ENCODE measurements at regions of chr5 and their contacts with region 1.

Region 1: GRCh38 chr5:14644623-14645237 is 19.8 kb upstream of the OTULIN start:
- DNase-seq: no peak
- H3K4me3 ChIP-seq: no peak overlapping the region
- H3K27me3 ChIP-seq: peaks cover 12% of the 10 kb centered on the region
- CTCF ChIP-seq: no peak

Region 2: GRCh38 chr5:13976867-13977830 is 667.6 kb before region 1 on chr5:
- CTCF ChIA-PET with region 1: interaction called, 31 read pairs
- POLR2A ChIA-PET with region 1: no interaction called
- DNase-seq: no peak
- H3K4me3 ChIP-seq: no peak overlapping the region
- H3K27me3 ChIP-seq: 0 out of 2 replicates have a peak, but pooled peaks cover 1% of the 10 kb centered on the region
- CTCF ChIP-seq: peak; percentile 63

Region 3: DNA sequence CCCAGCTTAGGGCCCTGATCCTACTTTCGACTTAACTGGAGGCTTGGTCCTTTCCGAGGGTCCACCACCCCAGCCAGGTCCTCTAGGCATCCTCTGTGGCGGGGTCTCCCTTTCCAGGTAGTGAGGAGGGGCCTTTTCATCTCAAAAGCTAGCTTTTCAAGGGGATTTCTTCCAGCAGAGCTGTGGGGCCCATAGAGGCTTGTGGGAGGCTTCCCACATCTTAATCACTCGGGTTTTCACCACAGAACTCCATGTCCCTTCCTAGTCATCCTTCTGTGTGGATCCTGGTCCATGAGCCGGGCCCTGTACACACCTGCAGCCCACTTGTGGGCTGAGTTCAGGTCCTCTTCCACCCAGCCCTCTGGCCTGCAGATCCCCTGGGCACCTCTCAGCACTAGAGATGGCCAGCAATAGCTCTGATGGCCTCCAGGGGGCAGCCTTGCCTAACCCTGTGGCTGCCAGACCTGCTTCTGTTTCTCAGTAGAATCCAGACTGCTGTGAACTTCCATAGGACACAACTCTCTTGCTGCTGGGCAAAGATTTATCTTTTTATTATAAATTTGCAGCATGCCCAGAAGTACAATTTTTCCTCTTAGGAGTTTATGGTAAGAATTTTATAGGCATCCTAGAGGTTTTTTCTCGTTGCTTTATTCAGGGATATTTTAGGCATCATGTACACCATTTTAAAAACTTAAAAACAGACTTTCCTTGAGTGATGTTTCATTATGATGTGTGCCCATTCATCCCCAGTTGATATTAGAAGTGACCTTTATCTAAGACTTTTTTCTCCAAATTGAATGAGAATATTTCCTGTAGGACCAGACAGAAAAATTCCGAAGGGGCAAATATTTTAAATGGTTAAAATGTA is 292.7 kb before region 1 on chr5:
- CTCF ChIA-PET with region 1: interaction called, 22 read pairs
- POLR2A ChIA-PET with region 1: no interaction called
- DNase-seq: peak; percentile 9
- H3K4me3 ChIP-seq: no peak overlapping the region
- H3K27me3 ChIP-seq: no peaks in the 10 kb centered on the region
- CTCF ChIP-seq: peak; percentile 99

Region 4: GRCh38 chr5:14399054-14399692 is 245.6 kb before region 1 on chr5:
- CTCF ChIA-PET with region 1: interaction called, 41 read pairs
- POLR2A ChIA-PET with region 1: no interaction called
- DNase-seq: no peak
- H3K4me3 ChIP-seq: no peak overlapping the region
- H3K27me3 ChIP-seq: no peaks in the 10 kb centered on the region
- CTCF ChIP-seq: peak; percentile 68

Region 5: DNA sequence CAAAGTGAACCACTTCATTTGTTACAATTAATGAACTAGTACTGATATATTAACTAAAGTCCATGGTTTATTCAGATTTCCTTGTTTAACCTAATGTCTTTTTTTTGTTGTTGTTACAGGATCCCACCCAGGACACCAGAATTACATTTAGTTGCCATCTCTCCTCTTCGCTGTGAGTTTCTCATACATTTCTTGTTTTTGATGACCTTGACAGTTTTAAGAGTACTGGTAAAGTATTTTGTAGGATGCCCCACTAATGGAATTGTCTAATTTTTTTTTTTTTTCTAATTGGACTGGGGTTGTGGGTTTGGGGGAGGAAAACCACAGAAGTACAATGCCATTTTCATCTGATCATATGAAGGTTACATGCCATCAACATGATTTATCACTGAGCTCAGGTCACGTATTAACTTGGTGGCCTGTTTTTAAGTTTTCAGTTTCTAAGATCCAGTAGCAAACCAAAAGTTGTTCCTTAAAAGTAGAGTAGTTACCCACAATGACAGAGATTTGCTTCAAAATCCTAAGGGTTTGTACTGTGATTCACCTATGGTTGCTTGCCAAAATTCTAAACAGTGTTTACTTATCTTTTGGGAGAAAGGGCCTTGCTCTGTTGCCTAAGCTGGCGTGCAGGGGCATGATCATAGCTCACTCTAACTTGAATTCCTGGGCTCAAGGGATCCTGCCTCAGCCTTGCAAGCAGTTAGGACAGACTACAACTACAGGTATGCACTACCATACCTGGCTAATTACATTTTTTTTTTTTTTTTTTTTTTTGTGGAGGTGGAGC is 15.3 kb after region 1 on chr5:
- CTCF ChIA-PET with region 1: interaction called, 17 read pairs
- POLR2A ChIA-PET with region 1: no interaction called
- DNase-seq: peak; percentile 32
- H3K4me3 ChIP-seq: no peak overlapping the region
- H3K27me3 ChIP-seq: peaks cover 1% of the 10 kb centered on the region; the same call in 1 of the 2 replicates
- CTCF ChIP-seq: no peak

Region 6: GRCh38 chr5:14671414-14671813 is 26.7 kb after region 1 on chr5:
- CTCF ChIA-PET with region 1: no interaction called
- POLR2A ChIA-PET with region 1: no interaction called
- DNase-seq: no peak
- H3K4me3 ChIP-seq: no peak overlapping the region
- H3K27me3 ChIP-seq: no peaks in the 10 kb centered on the region
- CTCF ChIP-seq: no peak